ENCODE measurements at regions of chr9 and their contacts with region 1.

Region 1: DNA sequence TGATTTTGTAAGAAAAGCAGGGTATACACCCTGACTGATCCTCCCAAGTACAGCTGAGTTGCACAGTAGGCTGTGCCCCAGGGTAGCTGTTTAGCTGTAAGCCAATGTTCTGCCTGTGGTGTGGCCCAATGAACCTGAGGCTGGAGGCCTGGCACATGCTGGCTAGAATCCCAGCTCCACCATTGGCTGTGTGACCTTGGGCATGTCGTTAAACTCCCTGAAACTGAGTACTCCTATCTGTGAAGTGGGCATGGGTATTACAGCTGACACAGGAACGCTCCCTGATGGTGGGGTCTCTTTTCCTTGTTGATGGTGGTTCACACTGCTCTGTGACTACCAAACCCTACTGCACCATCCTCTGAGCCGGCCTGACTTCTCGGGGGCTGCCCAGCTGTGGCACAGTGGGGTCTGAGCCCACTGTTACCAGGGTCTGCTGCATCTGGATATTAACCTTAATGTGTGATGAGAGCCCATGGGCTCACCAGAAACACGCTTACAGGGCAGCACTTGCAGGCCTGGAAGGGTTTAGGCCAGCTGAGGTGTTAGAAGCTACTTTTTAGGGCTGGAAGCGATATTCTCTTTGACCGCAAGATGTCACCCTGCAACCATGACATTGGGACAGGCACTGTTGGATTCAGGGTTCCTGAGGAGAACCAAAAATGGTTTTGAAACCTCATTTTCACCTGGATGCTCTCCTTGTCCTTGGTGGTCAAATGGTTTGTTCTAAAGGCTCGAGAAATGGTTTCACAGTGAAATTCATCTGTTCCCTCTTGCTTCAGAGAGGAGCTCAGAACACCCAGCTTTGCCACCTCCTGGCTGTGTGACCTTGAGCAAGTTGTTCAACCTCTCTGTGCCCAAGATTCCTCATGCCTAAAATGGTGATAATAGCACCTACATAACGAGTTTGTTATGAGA is 6.8 kb upstream of the GADD45G start:
- DNase-seq: peak; percentile 74
- H3K4me3 Mint-ChIP-seq: no peak overlapping the region
- H3K27ac Mint-ChIP-seq: no peak overlapping the region
- H3K4me1 Mint-ChIP-seq: no peaks in the 10 kb centered on the region
- H3K27me3 Mint-ChIP-seq: no peaks in the 10 kb centered on the region

Region 2: GRCh38 chr9:89576404-89576839 is 21.5 kb before region 1 on chr9:
- CTCF ChIA-PET with region 1: interaction called, 15 read pairs
- intact Hi-C with region 1: loop called (anchors 2 kb)
- DNase-seq: peak; percentile 35
- H3K4me3 Mint-ChIP-seq: no peak overlapping the region
- H3K27ac Mint-ChIP-seq: no peak overlapping the region
- H3K4me1 Mint-ChIP-seq: peaks cover 6% of the 10 kb centered on the region
- H3K27me3 Mint-ChIP-seq: peaks cover 20% of the 10 kb centered on the region